ENCODE measurements at regions of chr5 and their contacts with region 1.

Region 1: GRCh38 chr5:138668376-138669079 is 84.7 kb upstream of the CTNNA1 start:
- DNase-seq: no peak
- ATAC-seq: no peak
- H3K4me3 Mint-ChIP-seq: no peak overlapping the region
- H3K27ac Mint-ChIP-seq: no peak overlapping the region
- H3K4me1 Mint-ChIP-seq: peaks cover 11% of the 10 kb centered on the region
- H3K27me3 Mint-ChIP-seq: no peaks in the 10 kb centered on the region
- CTCF ChIP-seq: no peak

Region 2: DNA sequence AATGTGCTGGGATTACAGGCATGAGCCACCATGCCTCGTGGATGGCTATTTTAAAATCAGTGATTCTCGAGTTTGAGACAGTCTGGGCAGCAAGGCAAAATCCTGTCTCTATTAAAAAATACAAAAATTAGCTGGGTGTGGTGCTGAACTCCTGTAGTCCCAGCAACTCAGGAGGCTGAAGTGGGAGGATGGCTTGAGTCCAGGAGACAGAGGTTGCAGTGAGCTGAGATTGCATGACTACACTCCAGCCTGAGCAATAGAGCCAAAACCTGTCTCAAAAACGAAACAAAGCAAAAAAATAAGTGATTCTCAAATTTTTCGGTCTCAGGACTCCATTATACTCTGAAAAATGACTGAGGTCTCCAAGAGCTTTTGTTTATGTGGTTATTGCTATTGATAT is 45.5 kb before region 1 on chr5:
- CTCF ChIA-PET with region 1: no interaction called
- POLR2A ChIA-PET with region 1: no interaction called
- DNase-seq: no peak
- ATAC-seq: no peak
- H3K4me3 Mint-ChIP-seq: no peak overlapping the region
- H3K27ac Mint-ChIP-seq: no peak overlapping the region
- H3K4me1 Mint-ChIP-seq: peaks cover 10% of the 10 kb centered on the region
- H3K27me3 Mint-ChIP-seq: peaks cover 2% of the 10 kb centered on the region; the same call in 1 of the 2 replicates
- CTCF ChIP-seq: no peak

Region 3: DNA sequence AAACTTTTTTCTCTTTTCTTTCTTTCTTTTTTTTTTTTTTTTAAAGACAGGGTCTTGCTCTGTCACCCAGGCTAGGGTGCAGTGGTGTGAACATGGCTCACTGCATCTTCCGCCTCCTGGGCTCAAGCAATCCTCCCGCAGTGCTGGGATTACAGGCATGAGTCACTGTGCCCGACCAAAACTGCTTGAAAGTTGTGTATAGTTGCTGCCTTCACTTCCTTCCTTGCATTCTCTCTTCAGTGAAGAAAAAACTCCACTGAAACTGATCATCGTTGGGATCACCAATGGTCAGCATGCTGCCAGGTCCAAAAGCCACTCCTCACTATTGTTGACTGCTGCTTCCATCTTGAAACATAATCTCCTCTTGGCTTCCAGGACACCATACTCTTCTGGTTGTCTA is 18.1 kb after region 1 on chr5:
- CTCF ChIA-PET with region 1: no interaction called
- POLR2A ChIA-PET with region 1: no interaction called
- DNase-seq: no peak
- ATAC-seq: no peak
- H3K4me3 Mint-ChIP-seq: no peak overlapping the region
- H3K27ac Mint-ChIP-seq: no peak overlapping the region
- H3K4me1 Mint-ChIP-seq: no peaks in the 10 kb centered on the region
- H3K27me3 Mint-ChIP-seq: peaks cover 15% of the 10 kb centered on the region
- CTCF ChIP-seq: no peak

Region 4: GRCh38 chr5:138743506-138743905 is 75.0 kb after region 1 on chr5:
- CTCF ChIA-PET with region 1: no interaction called
- POLR2A ChIA-PET with region 1: no interaction called
- DNase-seq: peak; percentile 34
- ATAC-seq: peak; percentile 66
- H3K4me3 Mint-ChIP-seq: no peak overlapping the region
- H3K27ac Mint-ChIP-seq: peak overlapping the region; percentile 85
- H3K4me1 Mint-ChIP-seq: peaks cover 22% of the 10 kb centered on the region
- H3K27me3 Mint-ChIP-seq: no peaks in the 10 kb centered on the region
- CTCF ChIP-seq: no peak

Region 5: GRCh38 chr5:138824924-138825863 is 156.7 kb after region 1 on chr5:
- CTCF ChIA-PET with region 1: no interaction called
- POLR2A ChIA-PET with region 1: no interaction called
- DNase-seq: no peak
- ATAC-seq: peak; percentile 63
- H3K4me3 Mint-ChIP-seq: no peak overlapping the region
- H3K27ac Mint-ChIP-seq: no peak overlapping the region; the same call in 1 of the 2 replicates
- H3K4me1 Mint-ChIP-seq: peaks cover 28% of the 10 kb centered on the region
- H3K27me3 Mint-ChIP-seq: no peaks in the 10 kb centered on the region
- CTCF ChIP-seq: no peak; the same call in 1 of the 2 replicates

Region 6: GRCh38 chr5:138983984-138984383 is 315.5 kb after region 1 on chr5:
- CTCF ChIA-PET with region 1: no interaction called
- POLR2A ChIA-PET with region 1: interaction called, 11 read pairs
- DNase-seq: no peak
- ATAC-seq: no peak
- H3K4me3 Mint-ChIP-seq: no peak overlapping the region
- H3K27ac Mint-ChIP-seq: no peak overlapping the region
- H3K4me1 Mint-ChIP-seq: no peaks in the 10 kb centered on the region
- H3K27me3 Mint-ChIP-seq: no peaks in the 10 kb centered on the region; the same call in 1 of the 2 replicates
- CTCF ChIP-seq: no peak